ENCODE measurements at regions of chr6 and their contacts with region 1.

Region 1: GRCh38 chr6:29797135-29797534 is 30.5 kb upstream of the HLA-G start:
- DNase-seq: no peak
- H3K4me3 ChIP-seq: no peak overlapping the region
- H3K27ac ChIP-seq: no peak overlapping the region
- H3K4me1 ChIP-seq: peaks cover 11% of the 10 kb centered on the region
- H3K27me3 ChIP-seq: peaks cover 81% of the 10 kb centered on the region
- CTCF ChIP-seq: no peak

Region 2: GRCh38 chr6:29447670-29448069 is 349.5 kb before region 1 on chr6:
- intact Hi-C with region 1: no loop called
- DNase-seq: no peak
- H3K4me3 ChIP-seq: no peak overlapping the region
- H3K27ac ChIP-seq: no peak overlapping the region
- H3K4me1 ChIP-seq: no peaks in the 10 kb centered on the region
- H3K27me3 ChIP-seq: peaks cover 20% of the 10 kb centered on the region
- CTCF ChIP-seq: no peak

Region 3: GRCh38 chr6:29955783-29956182 is 158.6 kb after region 1 on chr6:
- intact Hi-C with region 1: loop called (anchors 5 kb)
- DNase-seq: no peak
- H3K4me3 ChIP-seq: no peak overlapping the region
- H3K27ac ChIP-seq: peak overlapping the region; percentile 48
- H3K4me1 ChIP-seq: peaks cover 5% of the 10 kb centered on the region
- H3K27me3 ChIP-seq: no peaks in the 10 kb centered on the region
- CTCF ChIP-seq: no peak

Region 4: DNA sequence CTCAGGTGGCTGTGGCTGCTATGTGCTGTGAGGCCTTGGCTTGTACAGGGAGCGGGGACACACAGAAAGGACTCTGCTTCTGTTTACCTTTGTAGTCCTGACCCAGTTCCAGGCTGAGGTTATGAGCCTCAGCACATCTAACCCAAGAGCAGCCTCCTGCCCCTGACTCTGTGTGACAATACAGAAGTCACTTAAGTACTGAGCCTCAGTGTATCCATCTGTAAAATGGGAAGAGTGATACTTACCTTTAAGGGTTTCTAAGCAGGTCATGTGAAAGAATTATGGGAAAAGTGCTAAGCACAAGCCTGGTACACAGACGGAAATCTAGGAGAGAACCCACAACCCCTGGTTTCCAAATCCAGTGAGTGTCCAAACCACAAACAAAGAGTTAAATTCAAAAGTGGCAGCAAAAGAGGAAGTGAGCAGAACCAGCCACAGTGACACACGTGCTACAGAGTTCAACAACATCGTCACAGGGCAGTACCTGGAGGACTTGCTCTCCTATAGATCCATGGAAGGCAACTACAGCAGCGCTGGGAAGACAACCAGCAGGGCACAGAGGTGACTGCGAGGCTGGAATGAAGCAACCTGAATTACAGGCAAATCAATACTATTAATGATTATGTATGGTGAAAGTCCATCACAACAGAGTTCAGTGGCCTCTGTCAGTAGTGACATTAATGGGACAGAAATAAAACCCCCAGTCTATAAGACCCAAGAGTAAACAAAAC is 403.6 kb after region 1 on chr6:
- intact Hi-C with region 1: no loop called
- DNase-seq: no peak
- H3K4me3 ChIP-seq: no peak overlapping the region
- H3K27ac ChIP-seq: no peak overlapping the region
- H3K4me1 ChIP-seq: peaks cover 34% of the 10 kb centered on the region
- H3K27me3 ChIP-seq: no peaks in the 10 kb centered on the region
- CTCF ChIP-seq: no peak